ENCODE measurements at regions of chr12 and their contacts with region 1.

Region 1: DNA sequence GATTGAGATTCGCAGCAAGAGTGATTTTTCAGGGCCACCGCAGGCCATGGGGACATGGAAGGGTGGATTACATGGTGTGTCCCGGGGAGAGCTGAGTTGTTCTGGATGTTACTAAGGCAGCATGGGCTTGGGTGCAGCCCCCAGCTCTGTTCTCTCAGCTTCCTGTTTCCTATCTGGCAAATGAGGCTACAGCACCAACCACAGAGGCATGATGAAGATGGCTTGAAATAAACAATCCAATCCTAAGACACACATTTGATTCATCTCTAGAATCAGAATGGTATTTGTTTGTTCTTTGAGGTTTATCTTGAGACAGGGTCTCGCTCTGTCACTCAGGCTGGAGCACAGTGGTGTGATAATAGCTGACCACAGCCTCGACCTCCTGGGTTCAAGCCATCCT is 21.6 kb downstream of the GLTP start:
- DNase-seq: no peak
- H3K4me3 ChIP-seq: no peak overlapping the region
- H3K27ac ChIP-seq: no peak overlapping the region
- H3K4me1 ChIP-seq: no peaks in the 10 kb centered on the region
- H3K27me3 ChIP-seq: no peaks in the 10 kb centered on the region
- CTCF ChIP-seq: no peak
- POLR2A ChIP-seq: no peak

Region 2: DNA sequence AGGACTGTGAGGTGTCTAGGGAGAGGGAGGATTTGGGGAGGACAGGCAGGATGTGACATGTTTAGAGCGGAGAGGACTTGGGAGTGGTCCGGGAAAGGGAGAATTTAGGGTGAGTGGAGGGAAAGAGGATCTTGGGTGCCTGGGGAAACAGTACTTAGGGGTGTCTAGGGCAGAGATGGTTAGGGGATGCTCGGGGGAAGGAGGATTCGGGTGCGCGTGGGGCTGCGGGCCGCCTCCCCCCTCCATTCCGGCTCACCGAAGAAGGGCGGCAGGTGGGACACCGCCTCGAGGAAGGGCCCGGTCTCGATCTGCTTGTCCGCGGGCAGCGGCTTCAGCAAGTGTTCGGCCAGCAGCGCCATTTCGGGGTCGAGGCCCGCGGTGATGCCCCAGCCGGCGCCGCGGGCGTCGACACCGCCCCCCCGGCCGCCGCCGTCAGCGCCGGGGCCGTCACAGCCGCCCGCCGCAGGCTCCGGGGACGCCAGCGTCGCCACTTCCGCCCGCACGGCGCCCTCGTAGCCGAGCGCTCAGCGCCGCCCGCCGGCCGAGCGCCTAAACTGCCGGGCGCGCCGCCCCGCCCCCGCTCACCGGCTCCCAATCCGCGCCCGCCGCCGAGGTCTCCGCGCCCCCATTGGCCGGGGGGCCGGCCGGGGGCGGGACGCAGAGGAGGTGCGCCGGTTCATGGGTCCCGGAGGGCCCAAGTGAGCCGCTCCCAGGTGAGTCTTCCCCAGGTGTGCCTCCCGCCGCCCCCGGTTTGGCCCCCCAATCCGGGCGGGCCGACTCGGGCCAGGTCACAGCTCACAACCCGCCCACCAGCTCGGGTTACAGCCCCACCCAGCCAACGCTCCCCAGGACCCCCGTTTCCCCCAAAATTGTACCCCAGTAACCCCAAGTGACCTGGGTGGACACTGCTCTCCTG is 21.5 kb after region 1 on chr12 and contains the start of gene GLTP:
- CTCF ChIA-PET with region 1: interaction called, 27 read pairs
- POLR2A ChIA-PET with region 1: no interaction called
- dilution Hi-C with region 1: no loop called
- intact Hi-C with region 1: loop called (anchors 1 kb)
- DNase-seq: peak; percentile 80
- H3K4me3 ChIP-seq: peak within 1 kb of the TSS; percentile 50 to 79 (median 76)
- H3K27ac ChIP-seq: peak within 1 kb of the TSS; percentile 40
- H3K4me1 ChIP-seq: peaks cover 17% of the 10 kb centered on the region
- H3K27me3 ChIP-seq: no peaks in the 10 kb centered on the region
- CTCF ChIP-seq: peak; percentile 38 to 68
- POLR2A ChIP-seq: peak; percentile 77
- total RNA-seq, gene GLTP: 46.6 and 48.0 TPM in 2 replicates

Region 3: DNA sequence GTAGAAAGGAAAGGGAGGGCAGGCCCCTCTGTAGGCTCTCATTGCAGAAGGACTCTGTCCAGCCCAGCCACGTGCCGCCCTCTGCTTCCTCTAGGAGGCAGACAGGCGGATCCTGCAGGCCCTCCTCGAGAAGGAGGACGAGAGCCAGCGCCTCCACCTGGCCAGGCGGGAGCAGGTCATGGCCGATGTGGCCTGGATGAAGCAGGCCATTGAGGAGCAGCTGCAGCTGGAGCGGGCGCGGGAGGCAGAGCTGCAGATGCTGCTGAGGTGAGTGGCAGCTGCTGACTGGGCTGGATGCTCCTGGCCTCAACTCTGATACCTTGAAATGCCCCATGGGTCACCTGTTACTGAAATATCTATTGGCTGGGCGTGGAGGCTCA is 52.2 kb after region 1 on chr12:
- CTCF ChIA-PET with region 1: interaction called, 20 read pairs
- POLR2A ChIA-PET with region 1: no interaction called
- dilution Hi-C with region 1: no loop called
- intact Hi-C with region 1: loop called (anchors 1 kb)
- DNase-seq: no peak
- H3K4me3 ChIP-seq: no peak overlapping the region
- H3K27ac ChIP-seq: no peak overlapping the region
- H3K4me1 ChIP-seq: no peaks in the 10 kb centered on the region
- H3K27me3 ChIP-seq: no peaks in the 10 kb centered on the region
- CTCF ChIP-seq: peak; percentile 44 to 56
- POLR2A ChIP-seq: no peak

Region 4: GRCh38 chr12:109927622-109928021 is 68.9 kb after region 1 on chr12:
- CTCF ChIA-PET with region 1: interaction called, 147 read pairs
- POLR2A ChIA-PET with region 1: no interaction called
- dilution Hi-C with region 1: no loop called
- intact Hi-C with region 1: loop called (anchors 1 kb)
- DNase-seq: peak; percentile 47
- H3K4me3 ChIP-seq: no peak overlapping the region
- H3K27ac ChIP-seq: no peak overlapping the region
- H3K4me1 ChIP-seq: no peaks in the 10 kb centered on the region
- H3K27me3 ChIP-seq: no peaks in the 10 kb centered on the region
- CTCF ChIP-seq: peak; percentile 69 to 83
- POLR2A ChIP-seq: no peak

Region 5: GRCh38 chr12:109982210-109982609 is 123.4 kb after region 1 on chr12:
- CTCF ChIA-PET with region 1: no interaction called
- POLR2A ChIA-PET with region 1: no interaction called
- dilution Hi-C with region 1: no loop called
- intact Hi-C with region 1: no loop called
- DNase-seq: no peak
- H3K4me3 ChIP-seq: no peak overlapping the region
- H3K27ac ChIP-seq: no peak overlapping the region
- H3K4me1 ChIP-seq: no peaks in the 10 kb centered on the region
- H3K27me3 ChIP-seq: no peaks in the 10 kb centered on the region
- CTCF ChIP-seq: no peak
- POLR2A ChIP-seq: no peak

Measured in endothelial cell of umbilical vein (primary cell).